ENCODE measurements at regions of chr1 and their contacts with region 1.

Region 1: GRCh38 chr1:112706908-112707663 is at the start of gene RHOC:
- DNase-seq: peak; percentile 63 to 81
- ATAC-seq: peak; percentile 64 to 78 (median 77)
- H3K4me3 ChIP-seq: peak within 1 kb of the TSS; percentile 69
- H3K4me3 Mint-ChIP-seq: peak within 1 kb of the TSS; percentile 93
- H3K27ac ChIP-seq: peak within 1 kb of the TSS; percentile 70
- H3K27ac Mint-ChIP-seq: peak within 1 kb of the TSS; percentile 90 to 93
- H3K4me1 ChIP-seq: peaks cover 54% of the 10 kb centered on the region
- H3K4me1 Mint-ChIP-seq: peaks cover 48 to 49% of the 10 kb centered on the region in 2 donors
- H3K27me3 ChIP-seq: no peaks in the 10 kb centered on the region
- H3K27me3 Mint-ChIP-seq: peaks cover 0 to 3% of the 10 kb centered on the region in 2 donors
- CTCF ChIP-seq: peak; percentile 63
- total RNA-seq, gene RHOC: 161 to 199 (median 195) TPM

Region 2: DNA sequence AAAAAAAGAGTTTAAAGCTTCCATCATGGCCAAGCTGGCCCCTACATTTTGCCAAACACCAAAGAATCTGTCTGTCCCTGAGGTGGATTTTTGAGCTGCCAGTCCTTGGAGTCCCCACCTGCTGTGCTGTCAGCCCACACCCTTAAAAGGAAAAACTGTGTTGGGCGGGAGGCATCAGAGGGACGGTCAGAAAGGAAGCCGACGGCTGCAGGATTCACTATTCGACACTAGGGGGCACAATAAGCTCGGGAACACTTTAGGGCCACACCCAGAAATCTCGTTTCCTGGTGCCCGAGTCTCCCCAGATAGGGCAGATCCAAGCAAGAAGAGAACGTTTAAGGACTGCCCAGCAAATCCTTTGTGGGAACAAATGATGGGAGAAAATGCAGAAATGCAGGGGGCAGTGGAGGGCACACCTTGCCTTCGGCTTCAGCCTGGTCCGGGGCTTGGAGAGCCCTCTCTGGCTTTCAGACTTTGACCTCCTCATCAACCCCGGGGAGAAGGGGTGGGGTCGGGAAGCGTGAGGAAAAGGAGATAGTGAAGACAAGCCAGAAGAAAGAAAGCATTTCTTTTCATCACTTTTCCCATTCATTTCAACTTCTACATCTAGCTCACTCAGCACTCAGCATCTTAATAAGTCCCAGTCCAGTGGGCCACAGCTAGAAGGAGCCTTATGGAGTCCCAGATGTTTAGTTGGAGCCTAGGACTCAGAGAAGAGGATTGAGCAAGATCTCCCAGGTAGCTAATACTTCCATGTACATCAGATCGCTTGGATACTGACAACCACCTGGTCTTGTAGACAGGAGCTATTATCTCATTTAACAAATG is 316.1 kb before region 1 on chr1:
- intact Hi-C with region 1: loop called (anchors 2 kb)
- DNase-seq: peak; percentile 61 to 91
- ATAC-seq: peak; percentile 88 to 94 (median 93)
- H3K4me3 ChIP-seq: no peak overlapping the region
- H3K4me3 Mint-ChIP-seq: peak overlapping the region; percentile 37
- H3K27ac ChIP-seq: no peak overlapping the region
- H3K27ac Mint-ChIP-seq: no peak overlapping the region
- H3K4me1 ChIP-seq: peaks cover 18% of the 10 kb centered on the region
- H3K4me1 Mint-ChIP-seq: peaks cover 15 to 17% of the 10 kb centered on the region in 2 donors
- H3K27me3 ChIP-seq: peaks cover 2% of the 10 kb centered on the region
- H3K27me3 Mint-ChIP-seq: peaks cover 37 to 49% of the 10 kb centered on the region in 2 donors
- CTCF ChIP-seq: peak; percentile 81

Region 3: GRCh38 chr1:112501810-112502641 is 205.1 kb before region 1 on chr1:
- intact Hi-C with region 1: loop called (anchors 5 kb)
- DNase-seq: peak; percentile 47 to 72
- ATAC-seq: peak; percentile 57 to 85 (median 76)
- H3K4me3 ChIP-seq: peak overlapping the region; percentile 12
- H3K4me3 Mint-ChIP-seq: peak overlapping the region; percentile 65
- H3K27ac ChIP-seq: no peak overlapping the region
- H3K27ac Mint-ChIP-seq: no peak overlapping the region
- H3K4me1 ChIP-seq: peaks cover 8% of the 10 kb centered on the region
- H3K4me1 Mint-ChIP-seq: no peaks in the 10 kb centered on the region
- H3K27me3 ChIP-seq: peaks cover 29% of the 10 kb centered on the region
- H3K27me3 Mint-ChIP-seq: peaks cover 56 to 61% of the 10 kb centered on the region in 2 donors
- CTCF ChIP-seq: peak; percentile 53

Region 4: DNA sequence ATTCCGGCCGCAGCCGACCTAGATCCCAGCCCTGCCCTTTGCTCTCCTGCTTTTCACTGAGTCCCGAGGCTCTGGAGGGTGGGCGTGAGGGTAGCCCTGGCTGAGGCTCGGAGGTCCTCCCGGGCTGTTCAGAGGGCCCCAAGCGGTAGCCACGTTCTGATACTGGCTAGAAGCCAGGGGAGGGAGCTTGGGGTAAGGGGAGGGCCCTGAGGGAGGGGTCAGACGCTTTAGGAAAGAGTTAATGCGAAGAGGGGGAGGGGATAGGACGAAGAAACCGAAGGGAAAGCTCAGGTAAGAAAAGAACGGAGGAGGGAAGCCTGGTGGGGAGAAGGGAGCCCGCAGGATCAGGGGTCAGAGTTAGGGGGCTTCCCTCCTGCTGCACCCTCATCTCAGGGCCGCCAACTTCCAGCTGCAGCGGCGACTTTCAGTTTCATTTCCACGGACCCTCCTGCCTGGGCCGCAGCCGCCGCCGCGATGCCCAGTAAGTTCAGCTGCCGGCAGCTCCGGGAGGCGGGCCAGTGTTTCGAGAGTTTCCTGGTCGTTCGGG is 32.6 kb before region 1 on chr1 and contains the start of gene MOV10:
- intact Hi-C with region 1: loop called (anchors 2 kb)
- DNase-seq: peak; percentile 66 to 82
- ATAC-seq: peak; percentile 82 to 87 (median 82)
- H3K4me3 ChIP-seq: peak within 1 kb of the TSS; percentile 84
- H3K4me3 Mint-ChIP-seq: peak within 1 kb of the TSS; percentile 97
- H3K27ac ChIP-seq: peak within 1 kb of the TSS; percentile 87
- H3K27ac Mint-ChIP-seq: peak within 1 kb of the TSS; percentile 95 to 98
- H3K4me1 ChIP-seq: peaks cover 18% of the 10 kb centered on the region
- H3K4me1 Mint-ChIP-seq: peaks cover 52 to 62% of the 10 kb centered on the region in 2 donors
- H3K27me3 ChIP-seq: no peaks in the 10 kb centered on the region
- H3K27me3 Mint-ChIP-seq: no peaks in the 10 kb centered on the region
- CTCF ChIP-seq: no peak
- total RNA-seq, gene MOV10: 87.9 to 124 (median 119) TPM

Region 5: DNA sequence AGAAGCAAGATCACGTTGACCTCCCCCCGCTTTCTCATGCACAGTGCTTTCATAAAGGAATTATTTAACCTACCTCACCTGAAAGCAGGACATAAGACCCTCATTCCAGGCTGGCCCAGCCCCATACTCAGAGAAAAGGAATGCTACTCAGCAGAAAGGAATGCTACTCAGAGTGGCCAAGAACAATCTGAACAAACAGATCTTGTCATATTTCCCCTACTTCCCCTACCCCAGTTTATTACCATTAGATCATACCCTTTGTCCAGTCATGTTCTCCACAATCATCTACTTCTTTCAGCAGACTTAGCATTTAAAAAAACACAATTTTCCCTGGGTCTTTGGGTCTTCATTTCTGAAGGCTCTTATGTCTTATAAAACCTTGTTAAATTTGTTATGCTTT is 159.1 kb after region 1 on chr1:
- intact Hi-C with region 1: no loop called
- DNase-seq: no peak
- ATAC-seq: no peak
- H3K4me3 ChIP-seq: no peak overlapping the region
- H3K4me3 Mint-ChIP-seq: no peak overlapping the region
- H3K27ac ChIP-seq: no peak overlapping the region
- H3K27ac Mint-ChIP-seq: peak overlapping the region in 1 of 2 donors; percentile 37
- H3K4me1 ChIP-seq: no peaks in the 10 kb centered on the region
- H3K4me1 Mint-ChIP-seq: no peaks in the 10 kb centered on the region
- H3K27me3 ChIP-seq: no peaks in the 10 kb centered on the region
- H3K27me3 Mint-ChIP-seq: peaks cover 0 to 7% of the 10 kb centered on the region in 2 donors
- CTCF ChIP-seq: no peak